Right cardiac atrium (tissue), 5 donors: ENCODE measurements at regions of chr7 and their contacts with region 1.

Region 1: DNA sequence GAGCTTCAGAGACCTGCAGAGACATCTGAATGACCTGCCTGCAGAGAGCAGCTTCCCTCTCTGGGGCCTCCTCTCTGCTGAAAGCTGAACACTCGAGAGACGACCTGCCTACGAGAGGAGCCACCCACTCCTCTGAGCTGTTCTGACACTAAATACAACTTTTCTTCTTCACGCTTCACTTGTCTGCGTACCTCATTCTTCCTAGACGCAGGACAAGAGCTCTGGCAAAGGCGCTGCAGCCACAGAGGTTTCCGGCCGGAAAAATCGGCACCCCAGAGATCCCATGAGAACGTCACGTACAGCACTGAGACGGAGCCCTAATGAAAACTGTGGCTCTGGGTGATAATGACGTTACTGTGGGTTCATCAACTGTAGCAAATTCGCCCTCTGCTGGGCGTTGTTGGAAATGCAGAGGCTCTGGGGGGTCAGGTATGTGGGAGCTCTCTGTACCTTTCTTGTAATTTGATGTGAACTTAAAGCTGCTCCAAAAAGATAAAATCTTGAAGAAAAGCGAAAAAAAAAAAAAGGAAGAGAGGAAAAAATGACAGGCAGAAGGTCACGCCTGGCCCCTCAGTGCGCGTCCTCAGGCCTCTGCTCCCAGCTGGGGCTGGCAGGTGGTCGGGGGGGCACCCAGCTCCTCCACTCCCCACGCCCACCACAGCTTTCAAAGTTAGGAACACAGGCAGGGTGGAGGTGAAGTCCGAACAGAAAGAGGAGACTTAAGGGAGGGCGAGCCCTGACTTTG is 120.7 kb downstream of the DYNC2I1 start:
- DNase-seq: peak; percentile 82 to 93 (median 91)
- ATAC-seq: peak; percentile 80 to 84
- H3K4me3 ChIP-seq: peak overlapping the region; percentile 39
- H3K27ac ChIP-seq: peak overlapping the region; percentile 47
- H3K4me1 ChIP-seq: peaks cover 3% of the 10 kb centered on the region
- H3K27me3 ChIP-seq: no peaks in the 10 kb centered on the region

Region 2: DNA sequence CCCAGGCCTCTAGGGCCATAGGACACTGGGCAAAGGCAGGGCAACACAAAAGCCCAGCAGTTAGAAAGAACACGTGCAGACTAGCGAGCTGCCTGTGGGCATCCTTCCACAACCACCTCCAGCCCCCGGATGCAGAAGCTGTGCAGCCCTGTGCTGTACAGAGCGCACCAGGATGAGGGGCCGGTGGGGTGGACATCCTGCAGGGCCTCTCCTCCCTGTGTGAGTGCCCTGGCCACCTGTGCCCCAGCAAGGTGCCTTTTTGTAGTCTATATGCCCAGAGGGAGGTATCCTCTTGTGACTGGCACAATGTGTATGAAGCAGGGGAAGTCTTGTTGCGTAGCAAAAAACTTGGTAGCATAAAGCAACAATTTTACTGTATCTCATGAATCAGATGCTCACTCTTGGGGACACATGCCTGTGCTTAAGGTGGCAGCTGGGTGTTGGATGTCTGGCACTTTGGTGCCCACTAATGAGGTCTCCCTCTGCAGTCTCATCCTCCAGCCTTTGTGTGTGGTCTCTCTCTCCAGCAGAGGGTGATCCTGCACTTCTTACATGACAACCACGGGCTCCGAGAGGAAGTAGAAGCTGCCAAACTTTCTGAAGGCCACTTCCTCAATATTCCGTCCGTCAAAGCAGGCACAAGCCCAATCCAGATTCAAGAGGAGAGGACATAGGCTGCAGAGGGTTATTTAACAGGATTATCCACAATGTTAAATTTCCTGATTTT is 281.1 kb before region 1 on chr7:
- intact Hi-C with region 1: loop called (anchors 5 to 10 kb)
- DNase-seq: peak; percentile 64 to 73 (median 73)
- ATAC-seq: peak; percentile 97 to 98
- H3K4me3 ChIP-seq: no peak overlapping the region
- H3K27ac ChIP-seq: no peak overlapping the region
- H3K4me1 ChIP-seq: no peaks in the 10 kb centered on the region
- H3K27me3 ChIP-seq: no peaks in the 10 kb centered on the region